Activated CD4-positive, alpha-beta T cell treated with anti-CD3 and anti-CD28 coated beads for 36 hours (primary cell): ENCODE measurements at regions of chr14 and their contacts with region 1.

Region 1: DNA sequence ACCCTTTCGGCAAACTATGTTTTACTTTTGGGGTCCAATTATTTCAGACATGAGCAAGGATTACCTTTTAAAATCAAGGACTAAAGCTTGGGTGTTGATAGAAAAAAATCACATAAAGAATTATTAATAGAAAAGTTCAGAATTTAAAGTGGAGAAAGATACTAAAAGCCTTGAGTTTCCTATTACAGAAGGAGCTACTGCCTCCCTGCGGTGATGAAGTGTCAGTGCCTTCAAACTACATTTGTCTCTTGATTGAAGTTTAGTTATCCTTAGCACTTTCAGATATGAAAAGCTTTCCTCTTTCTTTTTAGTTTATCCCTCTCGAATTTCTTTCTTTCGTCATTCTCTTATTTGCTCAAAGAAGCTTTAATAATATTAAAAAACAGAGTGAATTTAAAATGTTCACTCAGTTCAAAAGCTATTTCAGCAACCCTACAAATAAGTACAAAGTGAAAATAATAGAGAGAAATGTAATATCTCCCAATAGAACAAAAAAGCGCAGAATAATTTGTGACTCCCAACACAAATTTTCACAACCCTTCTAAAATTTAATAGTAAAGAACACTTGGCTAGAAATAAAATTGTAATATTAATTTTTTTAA is 87.6 kb downstream of the SEC23A start:
- DNase-seq: peak; percentile 37
- ATAC-seq: no peak
- H3K4me3 Mint-ChIP-seq: no peak overlapping the region
- H3K27ac Mint-ChIP-seq: no peak overlapping the region
- H3K4me1 Mint-ChIP-seq: no peaks in the 10 kb centered on the region
- H3K27me3 Mint-ChIP-seq: no peaks in the 10 kb centered on the region

Region 2: GRCh38 chr14:37903343-37904191 is 1111.9 kb before region 1 on chr14:
- CTCF ChIA-PET with region 1: interaction called, 5 read pairs
- POLR2A ChIA-PET with region 1: no interaction called
- intact Hi-C with region 1: loop called (anchors 5 to 10 kb)
- DNase-seq: peak; percentile 25
- ATAC-seq: peak; percentile 42
- H3K4me3 Mint-ChIP-seq: no peak overlapping the region
- H3K27ac Mint-ChIP-seq: no peak overlapping the region
- H3K4me1 Mint-ChIP-seq: no peaks in the 10 kb centered on the region
- H3K27me3 Mint-ChIP-seq: peaks cover 11% of the 10 kb centered on the region

Region 3: DNA sequence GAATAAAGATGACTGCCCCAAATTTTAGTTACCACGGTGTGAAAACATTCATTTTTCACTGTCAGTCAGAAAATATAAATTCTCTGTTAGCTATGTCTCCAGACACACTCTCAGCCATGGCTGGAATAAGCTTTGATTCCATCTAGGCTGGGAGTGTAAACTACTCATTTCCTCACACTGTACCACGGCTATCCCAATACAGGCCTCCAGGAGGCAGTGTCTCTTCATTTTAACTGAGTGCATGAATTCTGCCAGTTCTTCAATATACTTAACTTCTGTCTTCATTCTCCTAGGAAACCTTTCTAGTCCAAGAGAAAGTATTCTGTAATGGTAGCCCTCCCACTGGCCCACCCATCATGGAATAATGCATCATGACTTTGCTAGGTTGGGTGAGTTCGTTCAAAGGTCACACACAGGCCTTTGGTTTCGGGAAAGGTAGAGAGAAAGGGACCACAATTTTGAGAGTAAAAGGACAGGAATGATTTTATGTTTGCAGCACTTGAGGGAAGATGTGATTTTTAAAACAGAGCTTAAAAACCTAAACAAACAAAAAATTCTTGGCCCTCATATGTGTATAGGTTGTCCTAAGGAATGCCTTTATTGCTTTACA is 293.5 kb before region 1 on chr14:
- CTCF ChIA-PET with region 1: interaction called, 8 read pairs
- POLR2A ChIA-PET with region 1: no interaction called
- intact Hi-C with region 1: loop called (anchors 1 to 2 kb)
- DNase-seq: peak; percentile 61
- ATAC-seq: peak; percentile 51
- H3K4me3 Mint-ChIP-seq: no peak overlapping the region
- H3K27ac Mint-ChIP-seq: no peak overlapping the region
- H3K4me1 Mint-ChIP-seq: no peaks in the 10 kb centered on the region
- H3K27me3 Mint-ChIP-seq: no peaks in the 10 kb centered on the region

Region 4: DNA sequence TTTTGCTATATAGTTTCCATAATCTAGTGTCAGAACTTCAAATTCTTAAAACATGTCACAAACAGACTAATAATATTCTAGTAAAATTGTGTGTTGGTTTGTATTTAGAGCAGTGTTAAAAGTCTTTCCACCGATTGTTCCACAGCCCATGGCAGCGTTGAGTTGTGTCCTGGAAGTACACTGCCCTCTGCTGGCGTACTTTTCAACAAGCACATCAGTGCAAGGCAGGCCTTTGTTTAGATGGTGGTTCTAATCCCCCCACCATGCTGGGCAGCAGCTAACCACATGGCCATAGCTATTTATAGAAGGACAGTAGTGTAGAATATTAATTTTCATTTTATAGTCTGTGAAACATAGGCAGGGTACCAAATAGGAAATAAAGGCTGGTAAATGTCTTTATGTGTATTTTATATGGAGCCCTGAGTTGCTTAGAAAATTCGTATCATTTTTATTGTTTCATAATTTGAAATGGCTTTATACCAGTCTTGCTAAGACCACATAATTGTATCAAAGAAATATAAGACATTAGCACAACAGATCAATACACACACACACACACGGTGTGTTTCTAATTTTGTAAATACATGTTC is 147.8 kb before region 1 on chr14:
- CTCF ChIA-PET with region 1: interaction called, 7 read pairs
- POLR2A ChIA-PET with region 1: interaction called, 4 read pairs
- intact Hi-C with region 1: loop called in 1 of 2 experiments (anchors 10 kb)
- DNase-seq: peak; percentile 78
- ATAC-seq: peak; percentile 78
- H3K4me3 Mint-ChIP-seq: no peak overlapping the region
- H3K27ac Mint-ChIP-seq: no peak overlapping the region
- H3K4me1 Mint-ChIP-seq: no peaks in the 10 kb centered on the region
- H3K27me3 Mint-ChIP-seq: peaks cover 6% of the 10 kb centered on the region

Region 5: GRCh38 chr14:38999949-39000348 is 15.5 kb before region 1 on chr14:
- CTCF ChIA-PET with region 1: interaction called, 26 read pairs
- POLR2A ChIA-PET with region 1: no interaction called
- intact Hi-C with region 1: no loop called
- DNase-seq: no peak
- ATAC-seq: no peak
- H3K4me3 Mint-ChIP-seq: no peak overlapping the region
- H3K27ac Mint-ChIP-seq: no peak overlapping the region
- H3K4me1 Mint-ChIP-seq: no peaks in the 10 kb centered on the region
- H3K27me3 Mint-ChIP-seq: peaks cover 2% of the 10 kb centered on the region

Region 6: DNA sequence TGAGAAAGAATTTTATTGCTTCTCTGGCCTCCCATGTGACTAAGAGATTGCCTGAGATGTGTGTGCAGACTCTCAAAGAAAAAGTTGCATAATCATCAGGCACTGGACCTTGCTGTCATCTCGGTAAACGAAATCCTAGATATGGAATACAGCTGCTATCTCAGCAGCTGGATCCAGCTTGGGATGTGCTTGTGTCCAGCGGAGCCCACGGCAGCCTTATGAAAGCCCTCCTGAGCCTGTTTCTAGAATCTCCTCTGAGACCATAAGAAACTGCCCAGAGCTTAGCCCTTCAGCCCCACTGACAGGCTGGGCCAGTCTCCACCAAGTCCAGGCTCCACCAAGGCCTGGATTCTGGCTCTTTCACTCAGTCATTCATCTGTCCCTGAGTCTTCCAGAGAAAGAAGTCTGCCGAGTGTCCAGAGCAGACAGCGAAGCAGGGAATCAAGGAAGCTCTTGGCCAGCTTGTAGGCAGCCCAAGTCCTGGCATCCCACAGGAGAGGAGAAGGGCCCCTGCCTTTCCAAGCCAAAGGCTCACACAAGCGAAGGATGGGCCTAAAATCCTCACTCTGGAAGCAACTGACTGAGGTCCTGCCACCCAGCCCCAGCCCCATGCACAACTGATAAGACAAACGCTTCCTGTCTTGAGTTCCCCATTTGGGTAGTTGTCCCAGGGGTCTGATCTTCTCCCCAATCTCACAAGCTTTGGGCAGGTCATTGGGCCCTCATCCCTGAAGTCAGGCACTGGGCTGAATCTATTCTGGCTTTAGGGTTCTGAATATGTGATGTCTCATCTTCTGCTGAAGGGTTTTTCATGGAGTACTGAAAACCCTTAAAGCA is 10.2 kb before region 1 on chr14:
- CTCF ChIA-PET with region 1: interaction called, 26 read pairs
- POLR2A ChIA-PET with region 1: no interaction called
- intact Hi-C with region 1: no loop called
- DNase-seq: no peak
- ATAC-seq: no peak
- H3K4me3 Mint-ChIP-seq: no peak overlapping the region
- H3K27ac Mint-ChIP-seq: no peak overlapping the region
- H3K4me1 Mint-ChIP-seq: no peaks in the 10 kb centered on the region
- H3K27me3 Mint-ChIP-seq: peaks cover 2% of the 10 kb centered on the region

Region 7: DNA sequence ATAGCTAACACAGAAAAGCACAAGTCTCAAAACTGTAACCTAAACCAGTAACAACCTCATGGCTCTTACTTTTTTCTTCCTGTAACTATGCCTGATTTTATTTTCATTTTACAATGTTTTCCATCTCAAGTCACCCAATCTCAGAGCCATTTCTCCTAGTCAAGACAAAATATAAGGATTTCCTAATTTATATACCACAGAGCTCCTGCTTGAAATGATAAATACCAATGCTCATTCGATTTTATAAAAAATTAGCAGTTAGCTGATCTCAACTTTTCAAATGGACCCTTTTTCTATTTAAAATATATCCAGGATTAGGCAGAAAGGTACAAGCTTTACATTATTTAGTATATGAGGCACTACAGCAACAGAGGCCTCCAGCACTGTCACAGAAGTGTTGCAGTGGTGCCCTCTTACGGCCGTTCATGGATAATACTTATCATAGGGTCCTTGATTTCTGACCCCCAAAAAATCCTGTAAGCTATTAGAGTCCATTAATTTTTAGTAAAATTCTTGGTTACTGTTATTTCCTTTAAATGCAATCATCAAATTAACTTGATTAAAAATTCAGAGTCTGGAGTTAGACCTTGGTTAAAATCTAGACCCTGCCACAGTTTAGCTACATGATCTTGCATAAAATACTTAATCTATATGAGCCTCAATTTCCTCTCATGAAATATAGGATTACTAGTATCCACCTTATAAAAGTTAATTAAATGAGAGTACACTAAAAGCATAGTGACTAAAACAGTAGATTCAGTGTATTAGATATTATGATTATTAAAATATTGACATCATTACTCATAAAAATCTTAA is 19.2 kb after region 1 on chr14:
- CTCF ChIA-PET with region 1: interaction called, 12 read pairs
- POLR2A ChIA-PET with region 1: no interaction called
- intact Hi-C with region 1: no loop called
- DNase-seq: no peak
- ATAC-seq: no peak
- H3K4me3 Mint-ChIP-seq: no peak overlapping the region
- H3K27ac Mint-ChIP-seq: no peak overlapping the region
- H3K4me1 Mint-ChIP-seq: peaks cover 7% of the 10 kb centered on the region
- H3K27me3 Mint-ChIP-seq: no peaks in the 10 kb centered on the region

Region 8: DNA sequence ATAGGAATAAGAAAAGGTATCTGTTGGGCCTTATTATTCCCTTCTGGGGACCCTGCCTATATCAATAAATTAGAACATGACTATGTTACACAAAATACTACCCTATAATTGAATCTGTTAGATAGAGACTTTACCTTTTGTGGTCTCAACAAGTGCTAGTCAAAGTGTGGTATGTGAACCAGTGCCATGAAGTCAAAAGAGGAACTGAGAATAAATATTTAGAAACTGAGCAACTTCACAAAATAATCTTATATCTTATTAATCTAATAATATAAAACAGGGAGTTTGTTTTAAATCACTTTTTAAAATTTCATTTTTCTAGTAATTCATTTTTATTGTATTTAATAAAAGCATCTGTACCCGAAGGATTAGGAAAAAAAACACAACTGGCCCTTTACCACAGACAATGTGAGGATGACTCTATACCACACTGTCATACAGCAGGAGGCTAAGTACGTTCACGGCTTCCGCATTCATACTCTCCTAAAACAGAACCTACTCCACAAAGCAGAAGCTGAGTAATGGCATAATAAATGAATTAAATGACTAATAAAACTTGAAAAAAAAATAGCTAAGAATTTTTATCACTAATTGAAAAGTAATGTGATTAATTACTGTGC is 45.5 kb after region 1 on chr14:
- CTCF ChIA-PET with region 1: no interaction called
- POLR2A ChIA-PET with region 1: no interaction called
- intact Hi-C with region 1: no loop called
- DNase-seq: no peak
- ATAC-seq: no peak
- H3K4me3 Mint-ChIP-seq: no peak overlapping the region
- H3K27ac Mint-ChIP-seq: no peak overlapping the region
- H3K4me1 Mint-ChIP-seq: no peaks in the 10 kb centered on the region
- H3K27me3 Mint-ChIP-seq: no peaks in the 10 kb centered on the region